Prostate gland (tissue), 2 donors: ENCODE measurements at regions of chr12 and their contacts with region 1.

Region 1: DNA sequence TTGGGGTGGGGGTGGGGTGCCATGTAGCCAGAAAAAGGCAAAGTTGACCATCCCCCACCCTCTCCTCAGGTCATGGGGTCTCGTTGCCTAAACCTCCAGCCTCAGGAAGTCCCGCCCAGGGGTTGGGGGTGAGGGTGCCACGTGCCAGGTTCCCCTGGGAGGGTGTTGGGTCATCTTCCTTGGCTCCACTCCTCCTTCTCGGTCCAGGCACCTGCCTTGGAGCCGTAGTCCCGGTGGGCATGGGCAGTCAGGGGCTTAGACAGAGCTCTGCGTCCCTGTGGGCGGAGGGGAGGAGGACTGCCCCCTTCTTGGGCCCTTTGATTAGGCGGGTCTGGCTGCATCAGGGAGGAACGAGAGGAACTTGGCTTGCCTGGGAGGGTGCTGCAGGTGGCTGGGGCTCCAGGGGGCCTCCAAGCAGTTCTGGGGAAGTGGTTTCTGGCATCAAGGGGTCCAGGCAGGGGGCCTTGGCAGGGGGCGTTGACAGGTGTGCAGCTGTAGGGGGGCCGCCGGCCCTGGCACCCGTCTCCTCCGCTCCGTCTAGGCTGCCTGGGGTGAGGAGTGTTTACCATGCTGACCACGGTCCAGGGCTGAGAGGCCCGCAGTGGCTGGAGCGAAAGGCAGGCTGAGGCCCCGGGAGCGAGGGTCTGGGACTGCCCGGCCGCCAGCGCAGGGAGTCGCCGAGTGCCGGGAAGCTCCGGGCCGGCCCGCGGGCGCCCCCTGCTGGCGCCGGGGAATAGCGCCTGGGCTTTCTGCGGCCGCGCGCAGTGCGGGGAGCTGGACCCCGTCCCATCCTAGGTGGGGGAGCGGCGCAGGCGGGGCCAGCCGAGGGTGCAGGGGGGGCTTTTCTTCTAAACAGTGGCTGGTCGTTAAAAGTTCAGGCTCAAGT is 7.9 kb downstream of the SETD1B start:
- DNase-seq: peak; percentile 59
- H3K4me3 ChIP-seq: peak overlapping the region; percentile 51 to 53
- H3K27ac ChIP-seq: peak overlapping the region; percentile 50 to 59
- H3K4me1 ChIP-seq: peaks cover 16% of the 10 kb centered on the region
- H3K27me3 ChIP-seq: no peaks in the 10 kb centered on the region
- CTCF ChIP-seq: peak; percentile 97 to 99 (median 98)
- POLR2A ChIP-seq: no peak

Region 2: GRCh38 chr12:121574025-121574424 is 237.7 kb before region 1 on chr12:
- intact Hi-C with region 1: no loop called
- DNase-seq: no peak
- H3K4me3 ChIP-seq: no peak overlapping the region
- H3K27ac ChIP-seq: no peak overlapping the region
- H3K4me1 ChIP-seq: peaks cover 2% of the 10 kb centered on the region
- H3K27me3 ChIP-seq: no peaks in the 10 kb centered on the region
- CTCF ChIP-seq: no peak
- POLR2A ChIP-seq: no peak

Region 3: DNA sequence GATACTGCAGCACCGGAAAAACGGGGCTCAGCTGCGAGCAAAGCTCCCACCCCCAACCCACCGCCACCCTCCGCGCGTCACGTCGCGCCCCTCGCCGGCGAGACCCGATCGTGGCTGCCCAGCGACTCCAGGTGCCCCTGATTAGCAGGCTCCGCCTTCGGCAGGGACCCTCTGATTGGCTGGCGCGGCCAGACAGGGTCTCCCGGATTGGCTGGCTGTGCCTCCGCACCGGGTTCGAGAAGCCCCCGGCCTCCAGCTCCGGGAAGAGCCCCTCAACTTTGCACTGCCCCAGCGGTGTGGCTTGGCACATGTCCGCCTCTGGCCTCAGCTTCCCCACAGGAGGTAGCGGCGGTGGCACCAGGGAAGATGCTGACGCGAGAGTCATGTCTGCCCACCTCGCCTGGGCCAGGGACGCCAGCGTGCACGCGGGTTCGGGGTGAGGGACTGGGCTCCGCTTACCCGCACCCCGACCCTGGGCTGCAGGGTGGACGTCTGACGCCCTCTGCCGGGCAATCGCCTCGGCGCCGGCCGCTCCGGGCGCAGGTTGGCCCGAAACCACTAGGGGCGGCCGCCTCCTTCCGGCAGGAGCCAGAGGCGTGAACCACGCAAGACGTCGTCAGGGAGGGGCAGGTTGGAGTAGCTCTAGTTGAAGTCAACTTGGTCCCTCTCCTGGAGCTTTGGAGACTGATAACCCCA is 17.7 kb before region 1 on chr12:
- intact Hi-C with region 1: loop called (anchors 1 kb)
- DNase-seq: peak; percentile 88
- H3K4me3 ChIP-seq: peak overlapping the region; percentile 42 to 46
- H3K27ac ChIP-seq: peak overlapping the region; percentile 98 to 100
- H3K4me1 ChIP-seq: peaks cover 41% of the 10 kb centered on the region
- H3K27me3 ChIP-seq: no peaks in the 10 kb centered on the region
- CTCF ChIP-seq: peak; percentile 98 to 100 (median 100)
- POLR2A ChIP-seq: peak; percentile 37

Region 4: DNA sequence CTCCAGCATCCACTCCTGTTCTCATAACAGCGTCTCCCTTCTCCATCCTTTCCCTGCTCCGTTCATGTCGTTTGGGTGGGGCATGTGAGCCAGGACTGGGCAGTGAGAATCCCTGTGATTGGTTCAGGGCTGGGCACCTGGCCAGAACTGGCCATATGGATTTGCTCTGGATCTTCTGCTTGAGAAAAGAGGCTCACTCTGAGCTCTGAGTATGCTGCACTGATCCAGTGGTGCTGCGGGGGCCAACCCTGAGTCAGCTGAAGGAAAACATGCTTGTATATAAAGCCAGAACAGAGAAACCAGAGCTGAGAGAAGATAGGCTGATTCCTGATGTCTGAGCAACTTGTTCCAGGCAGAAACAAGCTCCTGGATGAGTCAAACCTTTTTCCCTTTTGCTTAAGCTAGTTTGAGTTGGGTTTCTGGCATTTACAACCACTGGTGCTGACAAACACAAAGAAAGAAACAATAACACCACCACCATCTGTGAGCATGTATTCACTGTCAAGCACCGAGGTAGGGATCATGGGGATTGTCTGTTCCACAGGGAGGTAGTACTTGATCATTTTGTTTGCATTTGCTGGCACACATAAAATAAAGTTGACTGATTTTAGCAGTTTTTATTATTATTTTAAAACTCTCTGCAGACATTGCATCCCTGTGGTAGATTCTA is 61.0 kb after region 1 on chr12:
- intact Hi-C with region 1: no loop called
- DNase-seq: no peak
- H3K4me3 ChIP-seq: no peak overlapping the region
- H3K27ac ChIP-seq: no peak overlapping the region
- H3K4me1 ChIP-seq: no peaks in the 10 kb centered on the region
- H3K27me3 ChIP-seq: no peaks in the 10 kb centered on the region
- CTCF ChIP-seq: no peak
- POLR2A ChIP-seq: no peak

Region 5: DNA sequence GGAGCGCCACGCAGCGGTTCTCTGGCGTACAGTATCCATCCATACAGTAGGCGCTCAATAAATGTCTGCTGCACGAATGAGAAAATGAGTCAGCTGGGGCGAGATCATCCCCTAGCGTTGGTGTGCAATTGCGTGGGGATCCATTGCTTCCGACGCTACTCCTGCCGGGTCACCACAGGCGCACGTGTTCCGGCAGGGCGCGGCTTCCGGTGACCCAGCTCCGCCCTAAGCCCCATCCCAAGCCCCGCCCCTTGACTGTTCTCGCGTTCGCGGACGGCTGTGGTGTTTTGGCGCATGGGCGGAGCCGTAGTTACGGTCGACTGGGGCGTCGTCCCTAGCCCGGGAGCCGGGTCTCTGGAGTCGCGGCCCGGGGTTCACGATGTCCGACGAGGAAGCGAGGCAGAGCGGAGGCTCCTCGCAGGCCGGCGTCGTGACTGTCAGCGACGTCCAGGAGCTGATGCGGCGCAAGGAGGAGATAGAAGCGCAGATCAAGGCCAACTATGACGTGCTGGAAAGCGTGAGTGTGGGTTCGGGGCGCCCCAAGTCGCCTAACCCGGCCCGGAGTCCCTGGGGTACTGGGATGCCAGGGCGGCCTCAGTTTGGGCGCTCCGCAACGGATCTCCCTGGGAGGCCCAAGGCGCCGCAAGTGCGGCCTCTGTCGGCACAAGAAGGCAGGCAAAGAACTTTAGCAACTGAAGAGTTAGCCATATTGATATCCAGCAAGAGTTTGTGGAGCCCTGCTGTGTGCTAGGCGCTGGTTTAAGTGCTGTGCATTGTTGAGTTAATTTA is 77.0 kb after region 1 on chr12 and contains the start of gene PSMD9:
- intact Hi-C with region 1: loop called (anchors 5 kb)
- DNase-seq: peak; percentile 95
- H3K4me3 ChIP-seq: peak within 1 kb of the TSS; percentile 68 to 82
- H3K27ac ChIP-seq: peak within 1 kb of the TSS; percentile 94 to 95
- H3K4me1 ChIP-seq: peaks cover 11% of the 10 kb centered on the region
- H3K27me3 ChIP-seq: no peaks in the 10 kb centered on the region
- CTCF ChIP-seq: peak; percentile 43 to 78 (median 59)
- POLR2A ChIP-seq: peak; percentile 75
- total RNA-seq, gene PSMD9: 68.2 to 73.3 TPM

Region 6: DNA sequence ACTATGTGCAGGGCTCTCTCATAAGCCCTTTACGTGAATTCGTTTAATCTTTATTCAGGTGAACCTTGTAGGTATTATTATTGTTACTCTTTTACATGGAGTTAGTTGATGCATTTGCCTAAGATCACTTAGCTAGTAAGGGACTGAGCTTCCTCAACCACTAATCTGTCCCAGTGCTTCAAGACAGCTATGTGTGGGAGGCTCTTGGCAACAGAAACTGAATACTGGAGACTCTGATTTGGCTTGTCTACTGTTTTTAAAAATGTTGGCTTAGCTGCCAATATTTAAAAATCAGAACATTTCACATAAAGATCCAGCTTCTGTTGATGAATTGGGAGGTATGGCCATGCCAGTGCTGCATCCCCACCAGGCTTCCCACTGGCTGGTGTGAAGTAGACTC is 722.2 kb after region 1 on chr12:
- intact Hi-C with region 1: no loop called
- DNase-seq: no peak
- H3K4me3 ChIP-seq: no peak overlapping the region
- H3K27ac ChIP-seq: no peak overlapping the region
- H3K4me1 ChIP-seq: no peaks in the 10 kb centered on the region
- H3K27me3 ChIP-seq: no peaks in the 10 kb centered on the region
- CTCF ChIP-seq: no peak
- POLR2A ChIP-seq: no peak